AG04449 (cell line): ENCODE measurements at regions of chr3 and their contacts with region 1.

Region 1: DNA sequence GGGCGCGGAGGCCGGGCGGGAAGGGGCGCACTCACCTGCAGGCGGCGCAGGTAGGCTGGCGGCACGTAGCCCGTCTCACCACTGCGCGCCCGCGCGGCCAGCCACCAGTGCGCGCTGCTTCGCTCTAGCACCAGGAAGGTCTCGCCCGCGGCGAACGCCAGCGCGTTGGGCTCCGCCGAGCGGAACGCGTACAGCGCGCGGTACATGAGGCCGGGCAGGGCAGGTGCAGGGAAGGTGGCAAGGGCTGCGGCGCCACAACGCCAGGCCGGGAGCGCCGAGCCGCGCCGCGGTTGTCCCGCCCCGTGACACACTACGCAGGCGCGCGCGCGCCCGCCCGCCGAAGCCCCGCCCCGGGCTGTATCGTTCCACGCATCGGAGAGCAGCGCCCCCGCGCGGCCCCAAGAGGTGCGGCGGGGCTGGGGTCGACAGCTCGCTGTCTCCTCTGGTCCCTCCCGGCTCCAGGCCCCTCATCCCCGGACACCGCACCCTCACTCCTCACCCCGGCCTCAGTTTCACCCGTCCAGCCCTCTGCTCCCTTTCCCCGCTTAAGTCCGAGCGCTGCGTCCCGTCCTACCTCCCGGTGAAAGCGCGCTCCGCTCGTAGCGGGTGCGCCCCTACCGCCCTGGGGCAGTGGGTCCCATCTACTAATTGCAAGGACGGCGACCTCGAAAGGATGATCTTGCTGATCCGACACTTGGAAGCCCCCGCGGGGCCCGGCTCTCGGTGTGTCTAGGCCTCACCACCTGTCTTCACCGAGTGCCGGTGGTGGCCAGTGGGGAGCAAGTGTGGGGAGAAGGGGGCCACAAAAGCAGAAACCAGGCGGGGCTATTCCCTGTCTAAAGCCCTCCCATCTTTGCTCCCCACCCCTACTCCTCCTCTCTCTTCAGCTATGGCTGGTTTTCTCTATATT is at the start of gene NCKIPSD:
- DNase-seq: no peak
- H3K4me3 ChIP-seq: peak within 1 kb of the TSS; percentile 95
- CTCF ChIP-seq: peak; percentile 84

Region 2: GRCh38 chr3:48222616-48223513 is 463.0 kb before region 1 on chr3 and contains the start of gene CAMP:
- CTCF ChIA-PET with region 1: no interaction called
- POLR2A ChIA-PET with region 1: no interaction called
- DNase-seq: no peak
- H3K4me3 ChIP-seq: no peak within 1 kb of the TSS
- CTCF ChIP-seq: no peak

Region 3: GRCh38 chr3:48556793-48557626 is 128.8 kb before region 1 on chr3 and contains the start of gene PFKFB4:
- CTCF ChIA-PET with region 1: interaction called, 15 read pairs
- POLR2A ChIA-PET with region 1: no interaction called
- DNase-seq: peak; percentile 93
- H3K4me3 ChIP-seq: peak within 1 kb of the TSS; percentile 86
- CTCF ChIP-seq: peak; percentile 1

Region 4: GRCh38 chr3:48663415-48664312 is 22.2 kb before region 1 on chr3:
- CTCF ChIA-PET with region 1: interaction called, 37 read pairs
- POLR2A ChIA-PET with region 1: interaction called, 3 read pairs
- DNase-seq: peak; percentile 92
- H3K4me3 ChIP-seq: peak overlapping the region; percentile 70
- CTCF ChIP-seq: peak; percentile 80

Region 5: DNA sequence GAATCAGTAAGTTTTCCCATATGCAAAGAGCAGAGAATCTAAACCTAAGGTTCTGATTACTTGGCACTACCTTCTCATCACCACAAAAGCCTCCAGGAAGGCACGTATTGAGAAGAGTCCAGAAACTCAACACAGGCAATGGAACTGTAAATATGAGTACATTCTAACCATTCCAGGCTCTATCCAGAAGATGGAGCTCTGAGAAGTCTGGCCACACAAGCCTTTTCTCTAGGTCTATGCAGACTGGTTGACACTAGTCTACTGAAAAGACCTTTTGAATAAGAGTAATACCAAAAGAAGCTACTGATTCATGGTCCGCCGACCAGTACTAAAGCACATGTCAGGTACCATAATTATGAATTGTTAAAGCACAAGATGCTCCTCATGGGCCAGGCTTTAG is 12.1 kb after region 1 on chr3:
- CTCF ChIA-PET with region 1: interaction called, 13 read pairs
- POLR2A ChIA-PET with region 1: interaction called, 3 read pairs
- DNase-seq: no peak
- H3K4me3 ChIP-seq: no peak overlapping the region
- CTCF ChIP-seq: no peak

Region 6: GRCh38 chr3:48708481-48708889 is 22.6 kb after region 1 on chr3:
- CTCF ChIA-PET with region 1: interaction called, 10 read pairs
- POLR2A ChIA-PET with region 1: interaction called, 4 read pairs
- DNase-seq: no peak
- H3K4me3 ChIP-seq: no peak overlapping the region
- CTCF ChIP-seq: no peak

Region 7: DNA sequence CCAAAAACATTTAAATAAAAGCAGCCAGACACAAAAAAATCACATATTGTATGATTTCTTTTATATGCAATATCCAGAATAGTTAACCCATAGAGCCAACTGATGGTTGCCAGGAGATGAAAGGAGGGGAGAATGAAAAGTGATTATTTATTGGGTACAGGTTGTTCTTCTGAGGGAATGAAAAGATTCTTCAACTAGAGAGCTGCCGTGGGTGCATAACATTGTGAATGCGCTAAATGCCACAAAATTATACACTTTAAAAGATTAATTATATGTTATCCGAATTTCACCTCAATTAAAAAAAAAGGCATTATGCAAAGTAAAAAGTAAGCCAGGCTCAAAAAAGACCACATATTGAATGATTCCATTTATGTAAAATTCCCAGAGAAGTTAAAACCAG is 125.7 kb after region 1 on chr3:
- CTCF ChIA-PET with region 1: no interaction called
- POLR2A ChIA-PET with region 1: no interaction called
- DNase-seq: no peak
- H3K4me3 ChIP-seq: no peak overlapping the region
- CTCF ChIP-seq: no peak